Right cardiac atrium (tissue), 5 donors: ENCODE measurements at regions of chr1 and their contacts with region 1.

Region 1: DNA sequence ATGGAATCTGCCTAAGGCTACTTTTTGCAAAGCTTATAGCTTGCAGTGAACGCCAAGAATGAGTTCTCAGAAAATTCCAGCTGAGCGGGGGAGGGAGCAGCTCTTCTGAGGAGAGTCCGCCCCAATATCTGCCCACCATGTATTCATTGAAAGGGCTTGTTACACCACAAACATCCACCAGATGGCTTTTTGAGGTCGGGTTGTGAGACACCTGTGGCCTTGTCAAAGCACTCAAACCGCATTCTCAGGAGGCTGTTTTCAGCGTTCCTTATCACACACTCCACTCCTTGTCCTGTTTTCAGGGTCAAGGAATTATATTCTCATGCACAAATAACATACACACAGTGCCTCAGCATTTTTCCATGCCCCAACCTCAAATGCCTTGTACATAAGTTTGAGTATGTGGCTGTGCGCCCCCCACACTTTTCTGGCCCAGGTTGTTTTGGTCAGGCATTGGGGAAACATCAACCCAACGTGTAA is 3.9 kb upstream of the C4BPB start:
- DNase-seq: no peak
- ATAC-seq: peak; percentile 61 to 80
- H3K4me3 ChIP-seq: no peak overlapping the region
- H3K27ac ChIP-seq: no peak overlapping the region
- H3K4me1 ChIP-seq: no peaks in the 10 kb centered on the region
- H3K27me3 ChIP-seq: no peaks in the 10 kb centered on the region

Region 2: DNA sequence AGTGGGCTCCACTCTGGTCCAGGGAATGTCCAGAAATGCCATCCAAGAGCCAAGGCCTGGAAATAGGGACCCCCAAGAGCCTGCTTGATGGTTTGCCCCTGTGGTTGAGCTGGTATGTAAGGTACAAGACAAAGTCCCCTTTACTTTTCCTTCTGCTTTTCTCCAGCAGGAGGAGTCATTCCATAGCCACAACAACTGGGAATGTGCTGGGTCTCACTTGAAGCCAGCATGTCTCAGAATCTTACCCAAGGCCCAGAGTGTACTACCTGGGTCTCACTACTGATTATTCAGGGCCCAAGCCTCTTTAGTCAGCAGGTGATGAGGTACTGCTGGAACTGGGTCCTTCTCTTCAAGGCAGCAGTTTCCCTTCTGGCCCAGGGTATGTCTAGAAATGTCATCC is 174.7 kb after region 1 on chr1:
- intact Hi-C with region 1: no loop called
- DNase-seq: no peak
- ATAC-seq: peak; percentile 45 to 83
- H3K4me3 ChIP-seq: no peak overlapping the region
- H3K27ac ChIP-seq: no peak overlapping the region
- H3K4me1 ChIP-seq: no peaks in the 10 kb centered on the region
- H3K27me3 ChIP-seq: no peaks in the 10 kb centered on the region

Region 3: GRCh38 chr1:207499573-207499972 is 414.8 kb after region 1 on chr1:
- intact Hi-C with region 1: loop called in 2 of 4 experiments (anchors 5 kb)
- DNase-seq: peak; percentile 54 to 72 (median 64)
- ATAC-seq: peak; percentile 64 to 72
- H3K4me3 ChIP-seq: no peak overlapping the region
- H3K27ac ChIP-seq: no peak overlapping the region
- H3K4me1 ChIP-seq: no peaks in the 10 kb centered on the region
- H3K27me3 ChIP-seq: peaks cover 4% of the 10 kb centered on the region